Prostate gland (tissue), 2 donors: ENCODE measurements at regions of chr1 and their contacts with region 1.

Region 1: DNA sequence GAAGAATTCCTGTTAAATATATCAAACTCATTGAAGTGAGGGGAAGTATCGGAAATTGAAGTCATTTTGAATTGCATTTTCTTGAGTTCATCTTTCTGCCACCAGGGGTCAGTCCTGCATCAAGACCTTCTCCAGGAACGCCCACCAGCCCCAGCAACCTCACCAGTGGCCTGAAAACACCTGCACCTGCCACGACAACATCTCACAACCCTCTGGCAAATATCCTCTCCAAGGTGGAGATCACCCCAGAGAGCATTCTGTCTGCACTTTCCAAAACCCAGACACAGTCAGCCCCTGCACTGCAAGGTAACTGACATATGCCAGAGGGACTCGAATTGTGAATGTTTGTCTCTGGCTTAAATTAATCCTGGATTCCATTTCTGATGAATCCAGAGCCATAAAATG is 22.8 kb upstream of the TARS2 start:
- DNase-seq: peak; percentile 46
- H3K4me3 ChIP-seq: no peak overlapping the region
- H3K27ac ChIP-seq: no peak overlapping the region
- H3K4me1 ChIP-seq: no peaks in the 10 kb centered on the region
- H3K27me3 ChIP-seq: no peaks in the 10 kb centered on the region
- CTCF ChIP-seq: peak; percentile 55 to 79 (median 68)
- POLR2A ChIP-seq: no peak

Region 2: DNA sequence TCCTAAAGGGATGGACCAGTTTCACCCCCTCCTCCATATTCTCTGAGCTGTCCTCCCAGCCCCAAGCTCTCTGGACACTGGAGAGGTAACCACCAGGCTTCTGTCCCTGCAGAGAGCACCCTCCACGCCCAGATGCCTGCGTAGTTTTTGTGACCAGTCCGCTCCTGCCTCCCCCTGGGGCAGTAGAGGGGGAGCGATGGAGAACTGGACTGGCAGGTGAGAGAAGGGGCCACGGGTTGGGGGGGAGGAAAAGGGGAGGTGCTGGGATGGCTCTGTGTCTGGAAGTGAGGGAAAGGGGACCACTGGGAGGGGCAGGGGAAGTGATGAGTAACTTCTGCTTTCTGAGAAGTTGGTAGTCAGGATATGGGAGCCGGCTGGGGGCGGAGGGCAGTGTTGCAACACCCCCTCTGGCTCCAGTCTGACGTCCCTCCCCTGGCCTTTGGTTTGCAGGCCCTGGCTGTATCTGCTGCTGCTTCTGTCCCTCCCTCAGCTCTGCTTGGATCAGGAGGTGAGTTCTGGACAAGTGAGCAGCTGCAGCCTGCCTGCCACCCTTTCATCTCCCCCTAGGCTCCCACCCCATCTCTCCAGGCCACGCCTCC is 87.8 kb after region 1 on chr1:
- intact Hi-C with region 1: loop called (anchors 5 kb)
- DNase-seq: peak; percentile 56
- H3K4me3 ChIP-seq: no peak overlapping the region
- H3K27ac ChIP-seq: peak overlapping the region; percentile 57 to 61
- H3K4me1 ChIP-seq: no peaks in the 10 kb centered on the region
- H3K27me3 ChIP-seq: no peaks in the 10 kb centered on the region
- CTCF ChIP-seq: no peak
- POLR2A ChIP-seq: peak; percentile 60

Region 3: DNA sequence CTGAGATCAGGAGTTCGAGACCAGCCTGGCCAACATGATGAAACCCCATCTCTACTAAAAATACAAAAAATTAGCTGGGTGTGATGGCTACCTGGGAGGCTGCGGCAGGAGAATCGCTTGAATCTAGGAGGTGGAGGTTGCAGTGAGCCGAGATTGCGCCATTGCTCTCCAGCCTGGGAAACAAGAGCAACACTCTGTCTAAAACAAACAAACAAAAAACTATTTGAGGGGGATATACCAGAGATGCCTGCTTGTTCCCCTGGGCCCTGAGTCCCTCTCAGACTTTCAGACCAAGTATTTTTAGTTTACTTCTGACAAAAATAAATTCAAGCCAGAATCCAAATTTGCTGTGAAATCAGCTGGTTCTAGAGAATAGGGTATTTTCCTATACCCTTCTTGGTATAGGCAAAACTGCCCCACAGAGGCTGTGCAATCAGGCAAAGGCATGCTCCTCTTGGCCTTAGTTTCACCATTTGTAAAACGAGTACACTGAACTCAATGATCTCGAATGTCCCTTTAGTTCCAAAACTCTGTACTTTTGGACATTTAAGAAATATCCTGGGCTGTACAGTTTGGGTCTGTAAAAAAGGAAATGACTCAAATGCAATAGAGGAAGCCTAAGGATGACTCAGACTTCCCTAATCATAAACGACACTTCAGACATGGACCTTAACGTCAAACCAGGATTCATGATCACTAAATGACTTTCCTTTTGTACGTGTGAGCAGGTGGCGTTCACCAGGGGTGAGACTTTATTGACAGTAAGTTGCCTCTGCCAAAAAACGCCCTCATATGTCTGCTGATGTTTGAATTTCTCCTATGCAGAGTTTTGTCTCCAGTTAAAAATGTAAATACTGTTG is 148.9 kb after region 1 on chr1:
- intact Hi-C with region 1: no loop called
- DNase-seq: peak; percentile 44
- H3K4me3 ChIP-seq: no peak overlapping the region
- H3K27ac ChIP-seq: peak overlapping the region; percentile 65 to 71
- H3K4me1 ChIP-seq: peaks cover 4% of the 10 kb centered on the region
- H3K27me3 ChIP-seq: no peaks in the 10 kb centered on the region
- CTCF ChIP-seq: no peak
- POLR2A ChIP-seq: no peak

Region 4: DNA sequence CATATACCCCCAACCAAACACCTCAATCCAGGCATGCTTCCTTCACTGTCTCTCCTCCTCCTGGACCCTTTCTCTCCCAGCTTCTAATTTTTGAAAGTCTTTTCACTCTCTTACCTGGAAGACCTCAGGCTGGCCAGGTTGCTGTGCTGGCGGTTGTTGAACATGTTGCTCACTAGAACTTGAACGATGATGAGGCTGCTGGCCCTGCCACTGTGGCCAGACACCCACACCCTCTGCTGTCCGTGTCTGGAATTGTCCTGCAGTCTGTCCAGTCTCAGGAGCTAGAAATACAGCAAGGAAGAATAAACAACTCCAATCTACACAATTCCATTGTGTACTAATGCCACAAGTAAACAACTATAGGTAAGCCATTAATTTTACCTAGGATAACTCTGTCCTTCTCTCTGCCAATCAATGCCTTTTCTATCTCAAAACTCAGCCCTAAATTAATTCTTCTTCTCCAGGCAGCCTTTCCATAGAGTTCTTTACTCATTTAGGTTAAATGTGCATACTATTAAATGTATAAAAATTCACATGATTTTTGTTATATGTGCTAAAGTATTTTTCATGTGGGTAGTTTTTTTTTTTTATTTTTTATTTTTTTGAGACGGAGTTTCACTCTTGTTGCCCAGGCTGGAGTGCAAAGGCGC is 348.8 kb after region 1 on chr1:
- intact Hi-C with region 1: loop called (anchors 10 kb)
- DNase-seq: peak; percentile 72
- H3K4me3 ChIP-seq: no peak overlapping the region
- H3K27ac ChIP-seq: peak overlapping the region; percentile 0 to 37
- H3K4me1 ChIP-seq: peaks cover 4% of the 10 kb centered on the region
- H3K27me3 ChIP-seq: no peaks in the 10 kb centered on the region
- CTCF ChIP-seq: peak; percentile 46 to 90 (median 77)
- POLR2A ChIP-seq: no peak

Region 5: DNA sequence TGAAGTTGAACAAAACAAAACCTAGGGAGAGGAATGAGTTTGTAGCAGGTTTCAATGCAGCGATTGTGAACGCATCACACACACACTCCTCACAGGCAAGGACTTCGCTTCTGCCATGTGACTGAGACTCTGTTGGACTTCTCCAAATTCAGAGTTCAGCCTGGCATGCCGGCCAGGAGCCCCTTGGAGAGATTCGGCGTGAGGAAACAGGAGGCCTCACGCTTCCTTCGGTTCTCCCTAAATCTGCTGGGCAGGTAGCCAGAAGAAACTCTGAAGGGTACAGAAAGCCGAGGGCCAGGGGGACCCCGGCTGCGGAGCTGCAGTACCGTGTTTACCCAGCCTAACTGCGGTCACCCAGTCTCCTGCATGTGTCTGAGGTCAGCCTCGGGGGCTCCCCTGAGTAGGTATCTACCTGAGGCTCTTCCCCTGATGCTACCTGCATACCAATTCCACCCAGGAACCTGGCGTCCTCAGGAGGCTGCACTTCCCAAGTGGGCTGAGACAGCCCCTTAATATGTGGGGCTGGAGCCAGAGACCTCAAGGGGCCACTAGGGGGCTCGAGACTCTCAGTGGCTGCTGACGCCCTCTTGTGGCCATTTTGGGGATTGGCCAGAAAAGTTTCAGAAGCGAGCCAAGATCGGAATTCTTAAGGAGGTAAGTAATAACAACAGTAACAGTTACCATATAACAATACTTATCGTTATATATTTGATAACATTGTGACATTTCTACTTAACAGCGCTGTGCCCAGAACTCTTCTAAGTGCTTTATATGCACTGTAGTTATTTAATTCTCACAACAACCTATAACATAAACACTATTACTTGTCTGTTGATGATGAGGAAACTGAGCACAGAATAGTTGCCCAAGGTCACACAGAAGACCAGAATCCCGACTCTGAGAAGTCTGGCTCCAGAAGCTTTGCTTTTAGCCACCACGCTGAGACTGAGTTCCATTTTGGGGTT is 515.0 kb after region 1 on chr1:
- intact Hi-C with region 1: loop called (anchors 10 kb)
- DNase-seq: peak; percentile 85
- H3K4me3 ChIP-seq: no peak overlapping the region
- H3K27ac ChIP-seq: peak overlapping the region in 1 of 2 donors; percentile 44
- H3K4me1 ChIP-seq: peaks cover 3% of the 10 kb centered on the region
- H3K27me3 ChIP-seq: no peaks in the 10 kb centered on the region
- CTCF ChIP-seq: peak; percentile 96 to 99 (median 96)
- POLR2A ChIP-seq: no peak